HCT116 (cell line): ENCODE measurements at regions of chr5 and their contacts with region 1.

Region 1: GRCh38 chr5:60295423-60295822 is 401.9 kb upstream of the PDE4D start:
- DNase-seq: peak; percentile 7
- ATAC-seq: peak; percentile 74
- H3K4me3 ChIP-seq: no peak overlapping the region
- H3K27ac ChIP-seq: no peak overlapping the region
- H3K4me1 ChIP-seq: no peaks in the 10 kb centered on the region
- H3K27me3 ChIP-seq: peaks cover 5% of the 10 kb centered on the region; the same call in 1 of the 2 replicates
- CTCF ChIP-seq: peak; percentile 28 to 50 (median 48); a peak in 5 of 6 replicates
- POLR2A ChIP-seq: no peak
- RAD21 ChIP-seq: peak; percentile 64

Region 2: GRCh38 chr5:60148356-60148755 is 147.1 kb before region 1 on chr5:
- CTCF ChIA-PET with region 1: no interaction called
- POLR2A ChIA-PET with region 1: no interaction called
- RAD21 ChIA-PET with region 1: no interaction called
- intact Hi-C with region 1: no loop called
- DNase-seq: no peak
- ATAC-seq: no peak
- H3K4me3 ChIP-seq: no peak overlapping the region
- H3K27ac ChIP-seq: no peak overlapping the region
- H3K4me1 ChIP-seq: no peaks in the 10 kb centered on the region
- H3K27me3 ChIP-seq: no peaks in the 10 kb centered on the region
- CTCF ChIP-seq: no peak
- POLR2A ChIP-seq: no peak
- RAD21 ChIP-seq: no peak

Region 3: DNA sequence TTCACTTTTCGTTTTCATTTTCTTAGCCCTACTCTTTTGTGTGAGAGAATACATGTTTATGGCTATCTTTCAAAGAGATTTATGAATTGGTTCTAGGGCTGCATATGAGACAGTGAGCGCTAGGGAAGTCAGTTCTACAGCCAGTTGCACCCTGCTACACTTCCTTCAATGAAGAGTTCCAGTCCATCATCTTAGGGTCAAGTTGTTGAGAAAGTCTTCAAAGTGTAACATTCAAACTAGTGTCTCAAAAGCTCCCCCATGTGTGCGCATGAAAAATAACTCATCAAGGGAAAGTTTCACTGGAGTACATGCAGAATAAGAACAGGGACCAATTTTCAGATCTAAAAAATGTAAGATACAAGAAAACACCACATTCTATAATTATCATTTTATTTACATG is 87.3 kb after region 1 on chr5:
- CTCF ChIA-PET with region 1: interaction called, 4 read pairs
- POLR2A ChIA-PET with region 1: no interaction called
- RAD21 ChIA-PET with region 1: no interaction called
- intact Hi-C with region 1: loop called (anchors 5 kb)
- DNase-seq: peak; percentile 12
- ATAC-seq: 0 out of 2 replicates have a peak, but pooled peaks have one; percentile 47
- H3K4me3 ChIP-seq: no peak overlapping the region
- H3K27ac ChIP-seq: no peak overlapping the region
- H3K4me1 ChIP-seq: no peaks in the 10 kb centered on the region
- H3K27me3 ChIP-seq: peaks cover 26% of the 10 kb centered on the region; the same call in 1 of the 2 replicates
- CTCF ChIP-seq: peak; percentile 13 to 26 (median 19); a peak in 3 of 6 replicates
- POLR2A ChIP-seq: no peak
- RAD21 ChIP-seq: peak; percentile 39; the same call in 1 of the 2 replicates

Region 4: GRCh38 chr5:60586307-60586901 is 291.0 kb after region 1 on chr5:
- CTCF ChIA-PET with region 1: no interaction called
- POLR2A ChIA-PET with region 1: no interaction called
- RAD21 ChIA-PET with region 1: no interaction called
- intact Hi-C with region 1: loop called (anchors 2 kb)
- DNase-seq: peak; percentile 2
- ATAC-seq: no peak
- H3K4me3 ChIP-seq: no peak overlapping the region
- H3K27ac ChIP-seq: no peak overlapping the region
- H3K4me1 ChIP-seq: no peaks in the 10 kb centered on the region
- H3K27me3 ChIP-seq: no peaks in the 10 kb centered on the region
- CTCF ChIP-seq: peak in 2 of 3 experiments; percentile 19 to 42; a peak in 3 of 6 replicates
- POLR2A ChIP-seq: no peak
- RAD21 ChIP-seq: peak; percentile 33; the same call in 1 of the 2 replicates

Region 5: GRCh38 chr5:60649283-60649917 is 354.0 kb after region 1 on chr5:
- CTCF ChIA-PET with region 1: no interaction called
- POLR2A ChIA-PET with region 1: no interaction called
- RAD21 ChIA-PET with region 1: no interaction called
- intact Hi-C with region 1: loop called (anchors 1 kb)
- DNase-seq: peak; percentile 33
- ATAC-seq: peak; percentile 71
- H3K4me3 ChIP-seq: no peak overlapping the region
- H3K27ac ChIP-seq: no peak overlapping the region
- H3K4me1 ChIP-seq: peaks cover 0 to 9% of the 10 kb centered on the region in 2 experiments; a peak in 2 of 4 replicates
- H3K27me3 ChIP-seq: no peaks in the 10 kb centered on the region
- CTCF ChIP-seq: peak; percentile 61 to 73 (median 69); a peak in 5 of 6 replicates
- POLR2A ChIP-seq: no peak
- RAD21 ChIP-seq: peak; percentile 55